ENCODE measurements at regions of chr1 and their contacts with region 1.

Region 1: DNA sequence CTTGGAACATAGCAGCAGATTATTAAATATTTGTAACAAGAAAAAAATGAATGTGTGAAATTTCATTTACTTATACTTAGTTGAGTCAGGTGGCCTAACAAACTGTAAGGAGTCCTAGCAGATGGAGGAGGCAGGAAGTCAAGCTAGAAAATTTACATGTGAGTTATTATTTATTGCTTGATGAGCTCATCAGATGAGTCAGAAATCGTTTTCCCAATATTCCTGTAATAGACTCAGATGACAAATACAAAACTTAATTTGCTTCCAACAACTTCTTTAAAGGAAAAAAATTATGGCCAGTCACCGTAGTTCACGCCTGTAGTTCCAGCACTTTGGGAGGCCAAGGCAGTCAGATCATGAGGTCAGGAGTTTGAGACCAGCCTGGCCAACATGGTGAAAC is 44.1 kb upstream of the PRRC2C start:
- DNase-seq: peak; percentile 99
- ATAC-seq: peak; percentile 59
- H3K4me3 ChIP-seq: no peak overlapping the region
- H3K27ac ChIP-seq: peak overlapping the region; percentile 71
- H3K4me1 ChIP-seq: peaks cover 34% of the 10 kb centered on the region
- H3K27me3 ChIP-seq: no peaks in the 10 kb centered on the region
- CTCF ChIP-seq: no peak

Region 2: GRCh38 chr1:171468120-171469035 is 27.1 kb after region 1 on chr1:
- CTCF ChIA-PET with region 1: no interaction called
- POLR2A ChIA-PET with region 1: no interaction called
- intact Hi-C with region 1: loop called (anchors 1 kb)
- DNase-seq: peak; percentile 69
- ATAC-seq: peak; percentile 94
- H3K4me3 ChIP-seq: no peak overlapping the region
- H3K27ac ChIP-seq: peak overlapping the region; percentile 51
- H3K4me1 ChIP-seq: peaks cover 16% of the 10 kb centered on the region
- H3K27me3 ChIP-seq: no peaks in the 10 kb centered on the region
- CTCF ChIP-seq: no peak

Region 3: GRCh38 chr1:171513743-171514142 is 72.5 kb after region 1 on chr1:
- CTCF ChIA-PET with region 1: no interaction called
- POLR2A ChIA-PET with region 1: no interaction called
- intact Hi-C with region 1: loop called (anchors 1 kb)
- DNase-seq: peak; percentile 44
- ATAC-seq: peak; percentile 88
- H3K4me3 ChIP-seq: no peak overlapping the region
- H3K27ac ChIP-seq: no peak overlapping the region
- H3K4me1 ChIP-seq: peaks cover 9% of the 10 kb centered on the region
- H3K27me3 ChIP-seq: no peaks in the 10 kb centered on the region
- CTCF ChIP-seq: no peak

Measured in PC-3 (cell line).